ENCODE measurements at regions of chr19 and their contacts with region 1.

Region 1: DNA sequence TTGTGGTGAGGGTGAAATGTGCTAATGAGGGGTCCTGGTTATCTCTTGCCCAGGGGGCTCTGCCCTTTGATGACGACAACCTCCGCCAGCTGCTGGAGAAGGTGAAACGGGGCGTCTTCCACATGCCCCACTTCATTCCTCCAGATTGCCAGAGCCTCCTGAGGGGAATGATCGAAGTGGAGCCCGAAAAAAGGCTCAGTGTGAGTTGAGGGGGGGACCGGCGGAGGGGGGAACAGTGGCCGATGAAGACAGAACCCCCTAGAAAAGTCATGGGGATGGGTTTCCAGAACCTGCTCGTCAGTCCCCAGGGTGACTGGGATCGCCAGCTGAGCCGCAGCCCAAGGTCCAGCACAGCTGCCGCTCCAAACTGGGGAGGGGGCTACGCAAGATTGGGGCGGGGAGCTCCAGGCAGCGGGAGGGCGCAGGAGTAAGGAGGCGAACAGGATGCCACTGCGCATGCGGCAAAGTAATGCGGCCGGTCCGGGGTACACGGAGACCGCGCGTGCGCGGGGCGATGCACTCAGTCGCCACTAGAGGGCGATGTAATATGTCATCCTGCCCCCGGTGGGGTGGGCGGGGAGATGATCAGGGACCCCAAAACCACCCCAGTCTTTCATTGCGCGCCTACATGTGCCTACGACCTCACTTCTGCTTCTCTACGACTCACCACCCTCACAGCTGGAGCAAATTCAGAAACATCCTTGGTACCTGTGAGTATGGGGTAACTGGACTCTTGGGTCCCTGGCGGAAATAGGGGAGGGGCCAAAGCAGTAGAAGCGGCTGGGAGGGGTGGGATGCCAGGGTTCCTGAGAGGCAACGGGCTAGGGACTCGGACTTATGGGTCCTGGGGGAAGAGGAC is 17.9 kb downstream of the BRSK1 start:
- DNase-seq: peak; percentile 94

Region 2: DNA sequence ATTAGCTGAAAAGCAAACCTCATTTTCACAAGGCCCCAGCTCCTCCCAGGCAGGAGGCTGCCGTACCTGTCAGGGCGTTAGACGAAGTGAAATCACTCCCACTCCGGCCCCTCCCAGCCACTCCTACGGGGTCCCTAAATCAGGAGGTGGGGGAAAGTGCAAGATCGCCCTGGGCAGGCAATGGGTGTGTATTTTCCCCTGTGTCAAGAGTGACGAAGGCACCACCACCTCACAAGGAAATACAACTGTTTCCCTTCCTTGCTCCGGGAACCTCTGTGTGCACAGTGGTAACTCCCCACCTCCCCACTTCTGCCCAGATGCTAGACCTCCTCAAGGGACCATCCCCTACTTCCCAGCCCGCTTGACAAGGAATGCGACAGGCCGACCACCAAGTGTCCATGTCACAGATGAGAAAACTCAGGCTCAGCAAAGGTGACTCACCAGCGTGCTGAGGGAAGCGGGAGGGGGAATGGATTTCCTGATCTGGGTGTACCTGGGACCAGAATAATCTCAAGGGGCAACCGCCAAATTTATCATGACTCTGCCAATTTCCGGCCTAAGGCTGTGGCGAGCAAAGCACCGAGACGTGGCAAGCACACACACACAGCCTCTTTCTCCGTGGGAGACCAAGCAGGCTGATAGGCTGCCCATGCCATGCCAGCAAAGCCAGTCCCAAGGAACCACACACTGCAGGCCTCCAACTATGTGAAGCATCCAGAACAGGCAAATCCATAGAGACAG is 50.2 kb before region 1 on chr19:
- CTCF ChIA-PET with region 1: no interaction called
- POLR2A ChIA-PET with region 1: no interaction called
- DNase-seq: no peak

Region 3: DNA sequence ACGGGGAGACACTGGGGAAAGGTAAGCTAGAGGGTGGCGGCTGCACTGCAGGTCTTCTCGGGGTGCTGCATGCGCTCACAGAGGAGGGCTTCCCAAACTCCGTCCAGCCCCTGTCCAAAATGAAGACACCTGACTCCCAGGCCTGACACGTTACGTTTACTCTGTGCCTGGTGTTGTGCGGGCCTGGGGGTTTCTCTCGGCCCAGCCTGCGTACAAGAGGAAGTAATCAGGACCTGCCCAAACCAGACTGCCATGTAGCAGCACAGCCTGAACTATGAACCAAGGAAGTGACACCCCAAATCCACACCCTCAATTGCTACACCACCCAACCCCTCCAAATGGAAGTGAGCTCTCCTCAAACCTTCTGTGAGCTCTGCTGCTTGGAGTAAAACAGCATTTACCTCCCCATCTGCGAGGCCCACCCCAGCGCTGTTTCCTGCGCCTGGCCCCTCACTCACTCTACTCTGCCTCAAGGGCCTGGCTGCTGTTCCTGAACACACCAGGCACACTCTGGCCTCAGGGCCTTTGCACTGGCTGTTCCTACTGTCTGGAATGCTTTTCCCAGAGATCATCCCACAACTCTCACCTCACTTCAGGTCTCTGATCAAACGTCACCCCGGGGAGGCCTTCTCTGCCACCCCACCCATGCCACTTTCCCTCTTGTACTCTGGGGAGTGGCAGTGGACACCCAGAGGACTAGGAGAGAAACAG is 24.8 kb before region 1 on chr19:
- CTCF ChIA-PET with region 1: no interaction called
- POLR2A ChIA-PET with region 1: no interaction called
- DNase-seq: no peak

Region 4: GRCh38 chr19:55289117-55289796 is 12.4 kb before region 1 on chr19:
- CTCF ChIA-PET with region 1: interaction called, 14 read pairs
- POLR2A ChIA-PET with region 1: interaction called, 3 read pairs
- DNase-seq: peak; percentile 27

Region 5: DNA sequence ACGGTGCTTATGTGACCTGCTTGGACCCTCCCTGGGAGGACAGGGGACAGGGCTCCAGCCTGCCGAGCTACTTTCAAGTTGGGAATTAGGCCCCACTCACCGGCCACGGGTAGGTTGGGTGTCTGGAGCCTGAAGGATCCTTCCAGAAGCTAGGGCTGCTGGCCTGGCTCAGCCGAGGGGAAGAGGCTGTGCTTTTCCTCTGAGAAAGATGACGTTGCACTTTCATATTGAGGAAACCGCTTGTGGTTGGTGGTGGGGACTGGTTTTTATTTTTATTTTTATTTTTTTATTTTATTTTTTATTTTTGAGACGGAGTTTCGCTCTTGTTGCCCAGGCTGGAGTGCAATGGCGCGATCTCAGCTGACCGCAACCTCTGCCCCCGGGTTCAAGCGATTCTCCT is 23.5 kb after region 1 on chr19 and contains the start of gene TMEM150B:
- CTCF ChIA-PET with region 1: interaction called, 11 read pairs
- POLR2A ChIA-PET with region 1: no interaction called
- DNase-seq: no peak

Measured in HEK293T (cell line).